SK-N-SH (cell line): ENCODE measurements at regions of chr7 and their contacts with region 1.

Region 1: GRCh38 chr7:90424720-90425119 is 21.5 kb downstream of the CLDN12 start:
- DNase-seq: no peak
- H3K4me3 ChIP-seq: no peak overlapping the region
- H3K27ac ChIP-seq: no peak overlapping the region
- H3K4me1 ChIP-seq: no peaks in the 10 kb centered on the region
- H3K27me3 ChIP-seq: no peaks in the 10 kb centered on the region
- CTCF ChIP-seq: no peak
- EP300 ChIP-seq: no peak
- RAD21 ChIP-seq: no peak

Region 2: GRCh38 chr7:90155206-90155605 is 269.5 kb before region 1 on chr7:
- CTCF ChIA-PET with region 1: interaction called, 120 read pairs
- POLR2A ChIA-PET with region 1: interaction called, 4 read pairs
- DNase-seq: no peak
- H3K4me3 ChIP-seq: peak overlapping the region in 1 of 2 experiments; percentile 73; a peak in 1 of 4 replicates
- H3K27ac ChIP-seq: peak overlapping the region in 1 of 2 experiments; percentile 89; a peak in 2 of 4 replicates
- H3K4me1 ChIP-seq: peaks cover 3 to 13% of the 10 kb centered on the region in 2 experiments
- H3K27me3 ChIP-seq: no peaks in the 10 kb centered on the region
- CTCF ChIP-seq: no peak
- EP300 ChIP-seq: no peak
- RAD21 ChIP-seq: no peak

Region 3: DNA sequence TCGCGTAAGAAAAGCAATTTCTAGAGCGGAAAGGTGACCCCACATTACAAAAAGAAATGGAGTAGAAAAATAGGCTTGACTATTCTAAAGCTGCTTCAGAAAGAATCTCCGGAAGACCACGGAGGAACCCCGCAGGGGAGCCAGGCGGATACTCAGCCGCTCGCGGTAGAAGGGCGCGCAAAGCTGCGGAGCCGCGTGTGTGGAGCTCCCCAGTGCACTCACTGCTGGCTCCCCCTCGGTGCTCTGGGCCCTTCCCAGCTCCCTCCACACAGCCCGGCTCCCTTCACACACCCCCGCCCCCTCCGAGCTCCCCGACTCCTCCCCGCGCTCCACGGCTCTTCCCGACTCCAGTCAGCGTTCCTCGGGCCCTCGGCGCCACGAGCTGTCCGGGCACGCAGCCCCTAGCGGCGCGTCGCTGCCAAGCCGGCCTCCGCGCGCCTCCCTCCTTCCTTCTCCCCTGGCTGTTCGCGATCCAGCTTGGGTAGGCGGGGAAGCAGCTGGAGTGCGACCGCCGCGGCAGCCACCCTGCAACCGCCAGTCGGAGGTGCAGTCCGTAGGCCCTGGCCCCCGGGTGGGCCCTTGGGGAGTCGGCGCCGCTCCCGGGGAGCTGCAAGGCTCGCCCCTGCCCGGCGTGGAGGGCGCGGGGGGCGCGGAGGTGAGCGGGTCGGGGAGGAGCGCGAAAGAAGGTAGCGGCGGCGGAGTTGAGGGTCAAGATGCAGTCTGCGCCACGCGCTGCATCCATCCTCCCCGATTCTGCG is 213.2 kb before region 1 on chr7 and contains the start of gene STEAP2:
- CTCF ChIA-PET with region 1: interaction called, 10 read pairs
- POLR2A ChIA-PET with region 1: no interaction called
- DNase-seq: peak; percentile 96
- H3K4me3 ChIP-seq: peak within 1 kb of the TSS; percentile 90 to 97
- H3K27ac ChIP-seq: peak within 1 kb of the TSS; percentile 71 to 86
- H3K4me1 ChIP-seq: peaks cover 6 to 11% of the 10 kb centered on the region in 2 experiments; a peak in 2 of 4 replicates
- H3K27me3 ChIP-seq: no peaks in the 10 kb centered on the region
- CTCF ChIP-seq: peak; percentile 74
- EP300 ChIP-seq: peak; percentile 33 to 62; a peak in 1 of 4 replicates
- RAD21 ChIP-seq: peak; percentile 39
- polyA plus RNA-seq, gene STEAP2: 6.6 and 9.5 TPM in 2 replicates

Region 4: GRCh38 chr7:90262438-90262837 is 162.3 kb before region 1 on chr7:
- CTCF ChIA-PET with region 1: interaction called, 15 read pairs
- POLR2A ChIA-PET with region 1: no interaction called
- DNase-seq: peak; percentile 45
- H3K4me3 ChIP-seq: no peak overlapping the region
- H3K27ac ChIP-seq: no peak overlapping the region
- H3K4me1 ChIP-seq: peaks cover 0 to 12% of the 10 kb centered on the region in 2 experiments; a peak in 2 of 4 replicates
- H3K27me3 ChIP-seq: no peaks in the 10 kb centered on the region
- CTCF ChIP-seq: peak; percentile 78
- EP300 ChIP-seq: no peak
- RAD21 ChIP-seq: peak; percentile 83

Region 5: DNA sequence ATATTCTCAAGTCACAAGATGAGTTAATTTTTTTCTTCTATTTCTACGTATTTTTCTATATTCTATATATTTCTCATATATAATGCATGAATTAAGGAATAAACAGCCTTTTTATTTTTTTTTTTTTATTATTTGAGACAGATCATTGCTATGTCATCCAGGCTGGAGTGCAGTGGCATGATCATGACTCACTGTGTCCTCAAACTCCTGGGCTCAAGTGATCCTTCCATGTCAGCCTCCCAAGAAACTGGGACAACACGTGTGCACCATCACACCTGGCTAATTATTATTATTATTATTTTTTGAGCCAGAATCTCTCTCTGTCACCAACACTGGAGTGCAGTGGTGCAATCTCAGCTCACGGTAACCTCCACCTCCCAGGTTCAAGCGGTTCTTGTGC is 19.9 kb before region 1 on chr7:
- CTCF ChIA-PET with region 1: interaction called, 26 read pairs
- POLR2A ChIA-PET with region 1: no interaction called
- DNase-seq: no peak
- H3K4me3 ChIP-seq: peak overlapping the region; percentile 71 to 81; a peak in 3 of 4 replicates
- H3K27ac ChIP-seq: peak overlapping the region; percentile 97 to 99; a peak in 3 of 4 replicates
- H3K4me1 ChIP-seq: peaks cover 20 to 24% of the 10 kb centered on the region in 2 experiments; a peak in 3 of 4 replicates
- H3K27me3 ChIP-seq: no peaks in the 10 kb centered on the region
- CTCF ChIP-seq: no peak
- EP300 ChIP-seq: no peak
- RAD21 ChIP-seq: no peak

Region 6: DNA sequence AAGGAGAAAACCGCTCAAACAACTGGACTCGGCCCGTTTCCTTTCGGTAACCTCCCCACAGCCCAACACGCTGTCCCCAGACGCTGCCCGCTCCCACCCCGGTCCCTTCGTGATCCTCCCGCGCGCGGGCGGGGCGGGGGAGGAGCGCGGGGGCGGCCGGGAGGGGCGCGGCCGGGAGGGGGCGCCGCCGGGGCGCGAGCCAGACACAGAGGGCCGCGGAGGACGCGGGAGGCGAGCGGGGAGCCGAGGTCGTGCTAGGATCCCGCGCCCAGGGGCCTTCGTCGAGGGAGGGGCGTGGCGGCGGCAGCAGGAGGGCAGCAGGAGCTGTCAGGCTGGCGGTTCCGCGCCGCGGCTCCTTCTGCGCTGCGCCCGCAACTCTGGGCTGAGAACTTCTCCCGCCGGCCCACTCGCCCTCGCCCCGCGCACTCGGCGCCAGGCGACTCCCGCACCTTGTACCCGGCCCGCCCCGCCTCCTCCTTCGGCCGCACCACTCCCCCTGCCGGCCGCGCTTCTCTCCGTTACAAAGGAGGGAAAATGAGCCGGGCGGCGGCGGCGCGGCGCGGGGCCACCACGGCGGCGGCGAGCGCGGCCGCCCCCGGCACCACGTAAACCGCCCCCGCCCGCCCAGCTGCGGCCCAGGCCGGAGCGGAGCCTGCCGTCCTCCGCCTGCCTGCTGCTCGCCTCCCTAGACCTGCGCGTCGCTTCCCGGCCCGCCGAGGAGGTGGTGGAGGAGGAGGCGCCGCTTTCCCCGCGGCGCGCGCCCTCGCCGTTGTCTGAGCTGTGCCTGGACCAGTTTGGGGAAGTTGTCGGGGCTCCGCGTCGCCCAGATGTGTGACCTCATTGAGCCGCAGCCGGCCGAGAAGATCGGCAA is 171.3 kb after region 1 on chr7 and contains the start of gene CDK14:
- CTCF ChIA-PET with region 1: interaction called, 12 read pairs
- POLR2A ChIA-PET with region 1: no interaction called
- DNase-seq: peak; percentile 96
- H3K4me3 ChIP-seq: peak within 1 kb of the TSS; percentile 96 to 99
- H3K27ac ChIP-seq: peak within 1 kb of the TSS; percentile 81 to 85
- H3K4me1 ChIP-seq: peaks cover 21 to 32% of the 10 kb centered on the region in 2 experiments
- H3K27me3 ChIP-seq: no peaks in the 10 kb centered on the region
- CTCF ChIP-seq: peak; percentile 48
- EP300 ChIP-seq: peak in 1 of 2 experiments; percentile 44; a peak in 1 of 4 replicates
- RAD21 ChIP-seq: no peak
- polyA plus RNA-seq, gene CDK14: 13.9 and 15.6 TPM in 2 replicates